Tibial artery (tissue), 4 donors: ENCODE measurements at regions of chrX and their contacts with region 1.

Region 1: GRCh38 chrX:65985922-65986588 is 53.8 kb downstream of the VSIG4 start:
- DNase-seq: no peak
- H3K4me3 ChIP-seq: no peak overlapping the region
- H3K27ac ChIP-seq: no peak overlapping the region
- H3K4me1 ChIP-seq: no peaks in the 10 kb centered on the region
- H3K27me3 ChIP-seq: no peaks in the 10 kb centered on the region
- CTCF ChIP-seq: peak; percentile 37 to 51

Region 2: GRCh38 chrX:65581661-65582339 is 404.3 kb before region 1 on chrX:
- intact Hi-C with region 1: loop called (anchors 2 kb)
- DNase-seq: peak; percentile 51 to 68
- H3K4me3 ChIP-seq: no peak overlapping the region
- H3K27ac ChIP-seq: no peak overlapping the region
- H3K4me1 ChIP-seq: no peaks in the 10 kb centered on the region
- H3K27me3 ChIP-seq: no peaks in the 10 kb centered on the region
- CTCF ChIP-seq: peak; percentile 56 to 65

Region 3: GRCh38 chrX:65758505-65758904 is 227.6 kb before region 1 on chrX:
- intact Hi-C with region 1: no loop called
- DNase-seq: no peak
- H3K4me3 ChIP-seq: no peak overlapping the region
- H3K27ac ChIP-seq: no peak overlapping the region
- H3K4me1 ChIP-seq: no peaks in the 10 kb centered on the region
- H3K27me3 ChIP-seq: no peaks in the 10 kb centered on the region
- CTCF ChIP-seq: no peak

Region 4: DNA sequence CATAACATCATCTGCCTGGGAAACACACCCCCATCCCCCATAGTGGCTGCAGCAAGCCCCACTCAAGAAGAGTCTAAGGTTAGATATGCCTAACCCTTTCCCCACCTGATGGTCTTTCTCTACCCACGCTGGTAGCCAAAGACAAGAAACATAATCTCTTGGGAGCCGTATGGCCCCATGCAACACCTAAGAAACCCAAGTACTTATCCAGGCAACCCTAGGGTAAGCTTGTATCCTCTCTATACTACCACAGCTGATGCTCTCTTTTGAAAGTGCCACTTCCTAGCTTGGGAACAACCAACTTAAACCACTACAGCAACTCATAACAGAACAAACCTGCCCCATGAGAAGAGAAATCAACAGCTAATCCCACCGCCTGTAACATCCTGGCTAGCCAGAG is 157.5 kb before region 1 on chrX:
- intact Hi-C with region 1: no loop called
- DNase-seq: no peak
- H3K4me3 ChIP-seq: no peak overlapping the region
- H3K27ac ChIP-seq: no peak overlapping the region
- H3K4me1 ChIP-seq: no peaks in the 10 kb centered on the region
- H3K27me3 ChIP-seq: no peaks in the 10 kb centered on the region
- CTCF ChIP-seq: no peak

Region 5: GRCh38 chrX:65910899-65911298 is 75.2 kb before region 1 on chrX:
- intact Hi-C with region 1: no loop called
- DNase-seq: no peak
- H3K4me3 ChIP-seq: no peak overlapping the region
- H3K27ac ChIP-seq: no peak overlapping the region
- H3K4me1 ChIP-seq: no peaks in the 10 kb centered on the region
- H3K27me3 ChIP-seq: no peaks in the 10 kb centered on the region
- CTCF ChIP-seq: no peak